CD4-positive, alpha-beta memory T cell (primary cell): ENCODE measurements at regions of chr17 and their contacts with region 1.

Region 1: GRCh38 chr17:58447039-58447975 is 30.0 kb upstream of the RNF43 start:
- DNase-seq: peak; percentile 45 to 57 (median 49)
- H3K4me3 ChIP-seq: no peak overlapping the region
- H3K4me3 Mint-ChIP-seq: no peak overlapping the region
- H3K27ac ChIP-seq: no peak overlapping the region
- H3K27ac Mint-ChIP-seq: peak overlapping the region in 2 of 7 donors; percentile 26 to 38
- H3K4me1 ChIP-seq: no peaks in the 10 kb centered on the region
- H3K4me1 Mint-ChIP-seq: peaks cover 0 to 10% (median 7%) of the 10 kb centered on the region in 4 donors
- H3K27me3 ChIP-seq: no peaks in the 10 kb centered on the region
- H3K27me3 Mint-ChIP-seq: no peaks in the 10 kb centered on the region

Region 2: DNA sequence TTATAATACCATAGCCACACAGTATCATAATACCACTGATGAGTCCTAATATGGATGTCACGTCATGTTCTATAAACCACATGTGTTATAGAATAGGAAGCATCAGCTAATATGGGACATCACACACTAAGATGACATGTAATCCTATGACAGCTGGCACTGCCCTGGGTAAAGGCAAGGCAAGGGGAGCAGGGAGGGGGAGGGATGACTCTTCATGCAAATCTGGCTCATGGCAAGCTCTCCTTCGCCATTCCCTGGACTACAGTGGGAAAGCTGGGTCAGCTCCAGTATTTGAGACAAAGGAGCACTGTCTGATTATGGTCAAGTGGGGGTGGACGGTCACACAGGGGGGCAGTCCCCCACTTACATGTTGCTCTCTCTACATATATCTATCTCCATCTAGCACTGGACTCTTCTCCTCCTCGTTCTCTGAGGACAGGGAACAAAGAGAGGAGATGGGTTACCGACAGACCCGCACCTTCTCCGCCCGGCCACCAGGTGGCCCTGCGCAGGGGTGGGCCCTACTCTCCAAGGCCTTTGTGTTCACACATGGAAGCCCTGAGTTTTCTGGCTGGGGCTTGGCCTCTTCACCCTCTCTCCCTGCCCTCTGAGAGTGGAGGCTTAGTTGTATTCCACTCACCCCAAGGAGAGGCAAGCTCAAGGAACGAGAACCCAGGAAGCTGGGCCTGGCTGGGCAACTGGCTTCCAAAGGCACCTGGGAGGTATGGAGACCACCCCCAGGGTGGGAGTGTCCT is 143.2 kb before region 1 on chr17:
- CTCF ChIA-PET with region 1: interaction called, 5 read pairs
- POLR2A ChIA-PET with region 1: no interaction called
- intact Hi-C with region 1: loop called (anchors 1 kb)
- DNase-seq: peak in 4 of 5 donors; percentile 59 to 65 (median 62)
- H3K4me3 ChIP-seq: no peak overlapping the region
- H3K4me3 Mint-ChIP-seq: no peak overlapping the region
- H3K27ac ChIP-seq: no peak overlapping the region
- H3K27ac Mint-ChIP-seq: peak overlapping the region in 4 of 7 donors; percentile 0 to 70 (median 44)
- H3K4me1 ChIP-seq: peaks cover 4% of the 10 kb centered on the region
- H3K4me1 Mint-ChIP-seq: peaks cover 4 to 10% (median 5%) of the 10 kb centered on the region in 4 donors
- H3K27me3 ChIP-seq: no peaks in the 10 kb centered on the region
- H3K27me3 Mint-ChIP-seq: no peaks in the 10 kb centered on the region

Region 3: DNA sequence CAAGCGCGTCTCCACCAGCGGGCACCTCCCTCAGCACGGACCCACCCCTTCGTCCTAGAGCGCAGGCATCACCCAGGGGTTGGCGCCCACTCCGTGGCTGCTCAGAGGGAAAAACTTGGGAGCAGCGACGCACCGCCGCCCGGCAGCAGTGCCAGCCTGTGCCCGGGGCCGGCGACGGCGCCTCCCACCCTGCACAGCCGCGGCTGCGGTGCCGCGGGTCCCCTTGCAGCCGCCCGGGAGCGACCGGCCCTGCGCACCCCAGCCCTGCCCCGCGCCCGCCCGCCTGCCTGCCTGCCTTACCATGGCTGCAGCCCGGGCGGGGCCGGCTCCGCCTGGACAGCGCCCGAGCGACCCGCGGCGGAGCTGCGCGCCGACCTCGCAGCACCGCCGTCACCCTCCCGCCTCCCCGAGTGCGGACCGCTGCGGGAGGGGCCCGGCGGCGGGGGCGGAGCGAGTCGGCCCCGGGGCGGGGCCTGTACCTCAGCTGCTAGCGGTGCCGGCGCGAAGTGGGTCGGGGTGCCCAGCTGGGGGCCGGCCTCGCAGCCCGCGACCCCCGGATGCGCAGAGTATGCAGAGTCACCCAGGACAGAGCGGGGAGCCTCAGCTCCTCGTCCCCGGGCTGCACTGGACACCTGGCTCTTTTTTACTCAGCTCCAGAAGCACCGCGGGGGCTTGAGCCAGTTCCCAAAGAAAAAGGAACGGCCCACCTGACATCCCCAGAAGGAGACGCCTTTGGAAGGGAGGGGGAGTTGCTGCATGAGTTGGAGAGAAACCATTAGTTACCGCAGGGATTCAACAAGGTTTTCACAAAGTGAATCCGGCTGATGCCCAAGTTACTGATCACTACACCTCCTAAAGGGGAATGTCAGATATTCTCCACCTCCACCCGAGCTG is 84.6 kb after region 1 on chr17:
- CTCF ChIA-PET with region 1: no interaction called
- POLR2A ChIA-PET with region 1: no interaction called
- intact Hi-C with region 1: no loop called
- DNase-seq: peak in 4 of 5 donors; percentile 55 to 64 (median 60)
- H3K4me3 ChIP-seq: peak overlapping the region in 1 of 2 donors; percentile 33
- H3K4me3 Mint-ChIP-seq: peak overlapping the region; percentile 61 to 75 (median 70)
- H3K27ac ChIP-seq: no peak overlapping the region
- H3K27ac Mint-ChIP-seq: peak overlapping the region in 1 of 7 donors; percentile 42
- H3K4me1 ChIP-seq: peaks cover 11% of the 10 kb centered on the region
- H3K4me1 Mint-ChIP-seq: peaks cover 0 to 4% (median 0%) of the 10 kb centered on the region in 4 donors
- H3K27me3 ChIP-seq: no peaks in the 10 kb centered on the region
- H3K27me3 Mint-ChIP-seq: peaks cover 0 to 5% of the 10 kb centered on the region in 2 donors

Region 4: GRCh38 chr17:58556833-58557250 is 109.5 kb after region 1 on chr17:
- CTCF ChIA-PET with region 1: no interaction called
- POLR2A ChIA-PET with region 1: no interaction called
- intact Hi-C with region 1: no loop called
- DNase-seq: no peak
- H3K4me3 ChIP-seq: no peak overlapping the region
- H3K4me3 Mint-ChIP-seq: no peak overlapping the region
- H3K27ac ChIP-seq: no peak overlapping the region
- H3K27ac Mint-ChIP-seq: peak overlapping the region in 3 of 7 donors; percentile 13 to 51 (median 22)
- H3K4me1 ChIP-seq: no peaks in the 10 kb centered on the region
- H3K4me1 Mint-ChIP-seq: peaks cover 4 to 8% (median 6%) of the 10 kb centered on the region in 4 donors
- H3K27me3 ChIP-seq: no peaks in the 10 kb centered on the region
- H3K27me3 Mint-ChIP-seq: peaks cover 1 to 2% of the 10 kb centered on the region in 2 donors

Region 5: GRCh38 chr17:58900171-58900907 is 453.0 kb after region 1 on chr17:
- CTCF ChIA-PET with region 1: no interaction called
- POLR2A ChIA-PET with region 1: no interaction called
- intact Hi-C with region 1: no loop called
- DNase-seq: no peak
- H3K4me3 ChIP-seq: no peak overlapping the region
- H3K4me3 Mint-ChIP-seq: no peak overlapping the region
- H3K27ac ChIP-seq: no peak overlapping the region
- H3K27ac Mint-ChIP-seq: no peak overlapping the region
- H3K4me1 ChIP-seq: no peaks in the 10 kb centered on the region
- H3K4me1 Mint-ChIP-seq: no peaks in the 10 kb centered on the region
- H3K27me3 ChIP-seq: no peaks in the 10 kb centered on the region
- H3K27me3 Mint-ChIP-seq: peaks cover 3 to 5% of the 10 kb centered on the region in 2 donors